ENCODE measurements at regions of chr17 and their contacts with region 1.

Region 1: GRCh38 chr17:309361-309888 is 43.2 kb downstream of the RPH3AL start:
- DNase-seq: peak; percentile 73
- ATAC-seq: peak; percentile 52
- H3K4me3 Mint-ChIP-seq: no peak overlapping the region
- H3K27ac Mint-ChIP-seq: no peak overlapping the region
- H3K4me1 Mint-ChIP-seq: peaks cover 24% of the 10 kb centered on the region
- H3K27me3 Mint-ChIP-seq: peaks cover 15% of the 10 kb centered on the region
- CTCF ChIP-seq: peak; percentile 94

Region 2: DNA sequence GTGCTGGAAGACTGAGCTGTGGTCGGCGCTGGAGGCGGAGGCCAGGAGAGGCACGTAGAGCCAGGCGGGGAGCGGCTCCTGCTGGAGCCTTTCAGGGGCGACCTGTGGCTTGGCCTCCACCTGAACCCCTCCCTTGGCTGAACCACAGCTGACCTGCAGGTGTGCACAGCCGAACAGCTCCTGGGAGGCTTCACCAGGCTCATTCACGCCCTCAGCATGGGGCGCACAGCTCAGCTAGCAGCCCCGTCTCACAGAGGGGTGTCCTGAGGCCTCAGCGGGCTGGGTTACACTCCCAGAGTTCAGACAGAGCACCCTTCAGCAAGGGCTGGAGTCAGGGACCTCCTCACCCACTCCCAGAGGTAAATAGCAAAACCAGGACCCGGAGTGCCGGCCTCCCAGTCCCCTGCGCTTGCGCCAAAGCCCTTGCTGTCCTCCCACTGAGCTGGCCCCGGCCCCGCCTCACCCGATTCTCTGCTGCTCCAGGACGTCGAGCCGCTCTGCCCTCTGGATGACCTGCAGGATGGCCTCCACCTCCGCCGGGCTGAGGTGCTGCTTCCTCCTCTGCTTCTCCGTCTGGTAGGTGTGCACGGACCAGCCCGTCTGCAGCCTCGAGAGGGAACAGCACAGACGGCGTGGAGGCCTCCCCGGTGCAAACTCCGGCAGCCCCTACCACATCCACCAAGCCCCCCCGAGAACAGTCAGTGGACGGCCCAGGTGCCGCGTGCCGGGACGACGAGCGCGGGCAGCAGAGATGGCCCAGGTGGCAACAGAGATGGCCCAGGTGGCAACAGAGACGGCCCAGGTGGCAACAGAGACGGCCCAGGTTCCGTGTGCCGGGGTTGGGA is 11.6 kb after region 1 on chr17:
- CTCF ChIA-PET with region 1: interaction called, 15 read pairs
- POLR2A ChIA-PET with region 1: no interaction called
- DNase-seq: peak; percentile 79
- ATAC-seq: peak; percentile 83
- H3K4me3 Mint-ChIP-seq: peak overlapping the region; percentile 10; the same call in 1 of the 2 replicates
- H3K27ac Mint-ChIP-seq: no peak overlapping the region
- H3K4me1 Mint-ChIP-seq: peaks cover 29% of the 10 kb centered on the region
- H3K27me3 Mint-ChIP-seq: peaks cover 12% of the 10 kb centered on the region
- CTCF ChIP-seq: no peak